ENCODE measurements at regions of chr12 and their contacts with region 1.

Region 1: GRCh38 chr12:54359033-54359761 is 5.1 kb downstream of the GPR84 start:
- DNase-seq: peak; percentile 99
- H3K4me3 ChIP-seq: peak overlapping the region; percentile 27 to 69 (median 69)
- H3K27ac ChIP-seq: peak overlapping the region; percentile 82
- H3K4me1 ChIP-seq: peaks cover 27% of the 10 kb centered on the region
- H3K27me3 ChIP-seq: no peaks in the 10 kb centered on the region
- CTCF ChIP-seq: no peak
- POLR2A ChIP-seq: peak; percentile 78

Region 2: DNA sequence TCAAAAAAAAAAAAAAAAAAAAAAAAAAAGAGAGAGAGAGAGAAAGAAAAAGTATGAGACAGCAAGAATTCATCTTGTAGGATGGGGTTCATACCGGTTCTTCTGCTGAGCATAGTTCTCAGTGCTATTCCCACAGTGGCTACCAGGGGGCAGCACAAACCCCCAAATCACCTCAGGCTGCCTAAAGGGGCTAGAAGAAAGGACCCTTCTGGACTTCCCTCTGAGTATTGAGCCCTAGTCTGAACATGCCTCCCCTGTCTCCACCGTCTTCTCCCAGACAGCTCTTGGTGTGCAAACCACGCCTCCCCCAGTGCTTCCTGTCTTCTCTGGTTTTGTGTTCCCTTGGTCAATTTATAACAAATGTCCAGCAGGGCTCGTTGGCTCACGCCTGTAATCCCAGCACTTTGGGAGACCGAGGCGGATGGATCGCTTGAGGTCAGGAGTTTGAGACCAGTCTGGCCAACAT is 139.1 kb before region 1 on chr12:
- CTCF ChIA-PET with region 1: interaction called, 11 read pairs
- POLR2A ChIA-PET with region 1: no interaction called
- dilution Hi-C with region 1: no loop called
- intact Hi-C with region 1: loop called (anchors 1 kb)
- DNase-seq: peak; percentile 76
- H3K4me3 ChIP-seq: no peak overlapping the region
- H3K27ac ChIP-seq: no peak overlapping the region
- H3K4me1 ChIP-seq: peaks cover 14% of the 10 kb centered on the region
- H3K27me3 ChIP-seq: peaks cover 2 to 5% of the 10 kb centered on the region in 2 experiments
- CTCF ChIP-seq: peak; percentile 77 to 85
- POLR2A ChIP-seq: no peak

Region 3: GRCh38 chr12:54259194-54260011 is 99.8 kb before region 1 on chr12:
- CTCF ChIA-PET with region 1: interaction called, 3 read pairs
- POLR2A ChIA-PET with region 1: no interaction called
- dilution Hi-C with region 1: no loop called
- intact Hi-C with region 1: loop called (anchors 2 kb)
- DNase-seq: peak; percentile 90
- H3K4me3 ChIP-seq: peak overlapping the region; percentile 10 to 76 (median 31)
- H3K27ac ChIP-seq: peak overlapping the region; percentile 74
- H3K4me1 ChIP-seq: peaks cover 40% of the 10 kb centered on the region
- H3K27me3 ChIP-seq: no peaks in the 10 kb centered on the region
- CTCF ChIP-seq: no peak
- POLR2A ChIP-seq: peak; percentile 49

Region 4: DNA sequence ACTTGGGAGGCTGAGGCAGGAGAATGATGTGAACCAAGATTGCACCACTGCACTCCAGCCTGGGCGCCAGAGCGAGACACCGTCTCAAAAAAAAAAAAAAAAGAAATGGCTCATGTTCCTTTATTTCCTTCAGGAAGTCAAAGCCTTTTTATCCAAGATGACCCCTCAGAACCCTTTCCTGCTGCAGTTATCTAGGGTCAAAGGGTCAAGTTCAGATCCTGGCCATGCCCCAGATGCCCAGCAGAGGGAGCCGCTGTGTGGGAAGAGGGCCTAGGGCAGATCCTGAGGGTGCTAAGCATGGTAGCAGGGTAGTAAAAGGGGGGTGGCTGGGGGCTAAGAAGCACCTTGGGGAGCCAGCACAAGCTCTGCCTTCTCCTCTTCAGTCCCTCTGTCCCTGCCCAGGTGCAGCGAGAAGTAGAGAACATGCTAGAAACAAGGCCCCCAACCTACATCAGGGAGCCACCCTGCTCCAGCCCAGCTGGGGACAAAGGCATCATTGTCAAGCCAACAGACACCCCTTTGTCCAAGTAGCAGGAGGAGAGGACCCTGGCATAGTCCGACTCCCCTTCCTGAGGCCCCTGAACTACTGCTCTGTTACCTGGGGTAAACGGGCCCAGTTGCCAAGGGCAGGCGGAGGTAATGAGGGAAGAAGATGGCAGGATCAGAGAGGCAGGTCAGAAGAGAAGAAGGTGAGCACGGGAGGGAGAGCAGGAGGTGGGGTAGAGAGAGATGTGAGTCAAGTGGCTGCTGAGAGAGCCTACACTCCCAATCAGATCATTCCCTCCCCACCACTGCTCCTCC is 64.8 kb before region 1 on chr12:
- CTCF ChIA-PET with region 1: interaction called, 7 read pairs
- POLR2A ChIA-PET with region 1: interaction called, 3 read pairs
- dilution Hi-C with region 1: no loop called
- intact Hi-C with region 1: loop called (anchors 1 kb)
- DNase-seq: peak; percentile 53
- H3K4me3 ChIP-seq: no peak overlapping the region
- H3K27ac ChIP-seq: no peak overlapping the region
- H3K4me1 ChIP-seq: no peaks in the 10 kb centered on the region
- H3K27me3 ChIP-seq: peaks cover 4 to 6% of the 10 kb centered on the region in 2 experiments
- CTCF ChIP-seq: peak; percentile 71 to 74
- POLR2A ChIP-seq: no peak

Region 5: DNA sequence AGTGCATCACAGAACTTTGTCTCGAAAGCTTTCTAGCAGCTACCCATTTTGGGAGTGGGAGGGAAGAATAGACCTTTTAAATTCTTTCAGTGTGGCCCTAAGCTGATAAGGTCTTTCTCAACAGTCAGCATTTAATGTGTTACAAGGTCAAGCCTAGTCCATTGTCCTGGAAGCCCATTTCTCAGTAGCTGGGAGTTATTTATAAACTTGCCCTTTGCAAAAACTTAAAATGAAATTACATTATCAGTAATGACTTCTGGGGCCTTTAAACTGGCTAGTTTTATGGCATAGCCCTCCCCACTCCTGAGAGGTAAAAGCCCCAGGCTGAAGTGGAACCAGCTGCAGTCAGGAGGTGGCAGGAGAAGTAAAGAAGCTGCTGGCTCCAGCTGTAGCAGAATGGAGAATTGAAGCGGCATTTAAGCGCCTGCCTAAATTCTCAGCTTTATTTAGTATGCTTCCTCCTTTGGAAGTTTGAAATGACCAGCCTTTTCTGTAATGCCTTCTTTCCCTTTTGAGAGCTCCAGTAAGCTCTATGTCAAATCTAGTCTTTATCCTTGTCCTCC is 21.8 kb before region 1 on chr12:
- CTCF ChIA-PET with region 1: interaction called, 61 read pairs
- POLR2A ChIA-PET with region 1: no interaction called
- dilution Hi-C with region 1: no loop called
- intact Hi-C with region 1: loop called (anchors 1 kb)
- DNase-seq: no peak
- H3K4me3 ChIP-seq: no peak overlapping the region
- H3K27ac ChIP-seq: no peak overlapping the region
- H3K4me1 ChIP-seq: no peaks in the 10 kb centered on the region
- H3K27me3 ChIP-seq: no peaks in the 10 kb centered on the region
- CTCF ChIP-seq: no peak
- POLR2A ChIP-seq: no peak

Region 6: DNA sequence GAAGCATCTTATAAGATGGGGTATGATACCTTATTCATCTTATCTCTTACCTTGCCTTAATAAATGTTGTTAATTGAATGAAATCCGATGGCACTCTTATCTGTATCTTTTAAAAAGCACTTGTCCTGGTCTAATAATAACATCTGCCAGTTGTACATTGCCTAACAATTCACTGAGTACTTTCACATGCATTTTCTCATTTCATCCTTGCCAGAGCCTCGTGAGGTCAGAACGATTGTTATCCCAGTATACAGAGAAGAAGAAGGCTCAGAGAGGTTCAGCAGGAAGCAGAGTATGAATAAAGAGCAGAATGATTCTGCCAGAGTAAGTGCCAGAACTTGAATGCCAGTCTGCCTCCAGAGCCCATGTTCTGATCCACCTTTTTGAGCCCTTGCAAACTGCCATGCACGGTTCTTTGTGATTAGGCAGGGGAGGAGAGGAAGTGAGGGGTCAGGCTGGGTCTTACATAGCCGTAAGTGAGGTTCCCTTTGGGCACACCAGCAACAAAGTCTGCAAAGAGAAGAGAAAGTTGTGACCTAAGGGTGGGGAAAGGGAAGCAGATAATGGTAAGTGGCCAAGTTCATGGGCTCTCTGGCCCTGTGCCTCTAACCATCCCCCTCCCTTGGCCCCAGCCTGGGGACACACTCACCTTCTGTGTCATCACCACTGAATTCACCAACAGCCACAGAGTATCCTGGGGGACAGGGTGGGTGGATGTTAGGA is 48.1 kb after region 1 on chr12:
- CTCF ChIA-PET with region 1: no interaction called
- POLR2A ChIA-PET with region 1: no interaction called
- dilution Hi-C with region 1: no loop called
- intact Hi-C with region 1: no loop called
- DNase-seq: no peak
- H3K4me3 ChIP-seq: no peak overlapping the region
- H3K27ac ChIP-seq: no peak overlapping the region
- H3K4me1 ChIP-seq: peaks cover 21% of the 10 kb centered on the region
- H3K27me3 ChIP-seq: no peaks in the 10 kb centered on the region
- CTCF ChIP-seq: no peak
- POLR2A ChIP-seq: no peak

Region 7: GRCh38 chr12:54509617-54510016 is 150.4 kb after region 1 on chr12:
- CTCF ChIA-PET with region 1: no interaction called
- POLR2A ChIA-PET with region 1: no interaction called
- dilution Hi-C with region 1: no loop called
- intact Hi-C with region 1: no loop called
- DNase-seq: no peak
- H3K4me3 ChIP-seq: no peak overlapping the region
- H3K27ac ChIP-seq: no peak overlapping the region
- H3K4me1 ChIP-seq: no peaks in the 10 kb centered on the region
- H3K27me3 ChIP-seq: peaks cover 12 to 24% of the 10 kb centered on the region in 2 experiments
- CTCF ChIP-seq: no peak
- POLR2A ChIP-seq: no peak